Dorsolateral prefrontal cortex (tissue), 120 donors: ENCODE measurements at regions of chr3 and their contacts with region 1.

Region 1: DNA sequence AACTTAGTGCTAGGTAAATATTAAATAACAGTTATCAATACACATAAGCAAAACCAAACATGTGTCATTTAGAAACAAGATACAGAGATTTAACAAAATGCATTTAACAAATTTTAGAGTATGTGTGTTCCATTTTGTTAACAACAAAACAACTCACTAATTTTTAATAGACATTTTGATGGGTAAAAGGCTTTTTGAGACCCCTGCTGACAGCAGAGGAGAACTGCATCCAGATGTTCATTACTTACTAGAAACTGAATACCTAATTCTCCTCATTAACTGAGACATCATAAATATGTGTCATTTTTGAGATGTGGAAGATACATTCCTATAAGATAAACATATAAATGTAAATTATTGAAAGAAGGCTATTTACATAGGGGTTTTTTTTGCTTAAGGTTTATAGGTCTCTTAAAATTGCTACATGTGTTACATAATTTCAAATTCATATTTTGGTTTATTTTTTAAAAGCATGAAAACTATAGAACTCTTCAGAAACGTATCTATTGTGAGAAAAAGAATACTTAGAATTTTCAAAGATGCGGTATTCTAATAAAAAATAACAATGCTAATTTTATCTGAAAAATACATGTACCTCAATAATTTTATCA is 1009.8 kb downstream of the TUSC7 start:
- DNase-seq: no peak
- H3K4me3 ChIP-seq: no peak overlapping the region
- H3K27ac ChIP-seq: no peak overlapping the region
- H3K27me3 ChIP-seq: no peaks in the 10 kb centered on the region
- CTCF ChIP-seq: peak; percentile 61 to 90 (median 76)

Region 2: GRCh38 chr3:116852803-116853202 is 866.6 kb before region 1 on chr3:
- intact Hi-C with region 1: loop called in 1 of 2 experiments (anchors 10 kb)
- DNase-seq: no peak
- H3K4me3 ChIP-seq: no peak overlapping the region
- H3K27ac ChIP-seq: no peak overlapping the region
- H3K27me3 ChIP-seq: no peaks in the 10 kb centered on the region
- CTCF ChIP-seq: no peak

Region 3: GRCh38 chr3:117801912-117802239 is 82.5 kb after region 1 on chr3:
- intact Hi-C with region 1: no loop called
- DNase-seq: no peak
- H3K4me3 ChIP-seq: no peak overlapping the region
- H3K27ac ChIP-seq: peak overlapping the region in 10 of 59 donors; percentile 10 to 80 (median 33)
- H3K27me3 ChIP-seq: no peaks in the 10 kb centered on the region
- CTCF ChIP-seq: no peak